Left lung (tissue), 14 donors: ENCODE measurements at regions of chr9 and their contacts with region 1.

Region 1: GRCh38 chr9:129783516-129784361 is 19.2 kb upstream of the TOR1B start:
- DNase-seq: peak; percentile 56 to 79 (median 74)
- ATAC-seq: peak; percentile 100
- H3K4me3 ChIP-seq: no peak overlapping the region
- H3K27ac ChIP-seq: no peak overlapping the region
- H3K4me1 ChIP-seq: peaks cover 0 to 17% of the 10 kb centered on the region in 2 donors
- H3K27me3 ChIP-seq: peaks cover 0 to 22% of the 10 kb centered on the region in 2 donors
- CTCF ChIP-seq: peak; percentile 86 to 95

Region 2: DNA sequence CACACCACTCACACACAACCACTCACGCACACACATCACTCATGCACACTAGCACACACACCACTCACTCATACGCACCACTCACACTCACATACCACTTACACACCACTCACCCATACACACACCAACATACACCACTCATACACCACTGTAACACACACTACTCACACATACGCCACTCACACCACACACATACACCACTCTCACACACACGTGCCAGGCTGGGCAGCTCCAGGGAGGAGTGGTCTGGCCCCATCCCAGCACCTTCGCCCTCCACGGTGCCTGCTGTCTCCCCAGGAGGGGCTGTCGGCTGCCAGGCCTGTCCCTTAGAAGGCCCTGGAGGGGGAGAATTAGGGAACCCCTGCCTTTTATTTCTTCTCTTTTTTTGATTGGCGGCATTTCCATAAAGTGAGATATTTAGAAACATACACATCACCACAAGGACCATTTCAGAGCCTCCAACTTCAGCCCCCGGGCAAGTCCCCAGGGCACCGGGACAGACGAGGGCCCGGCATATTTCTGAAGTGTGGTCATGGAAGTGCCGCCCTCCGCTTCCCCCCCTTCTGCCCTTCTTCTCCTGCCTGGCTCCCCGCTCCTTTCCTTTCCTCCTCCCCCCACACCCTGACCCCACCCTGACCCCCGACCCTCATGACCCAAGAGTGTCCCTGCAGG is 135.5 kb before region 1 on chr9:
- intact Hi-C with region 1: loop called in 1 of 2 experiments (anchors 5 kb)
- DNase-seq: no peak
- ATAC-seq: no peak
- H3K4me3 ChIP-seq: no peak overlapping the region
- H3K27ac ChIP-seq: no peak overlapping the region
- H3K4me1 ChIP-seq: no peaks in the 10 kb centered on the region
- H3K27me3 ChIP-seq: no peaks in the 10 kb centered on the region
- CTCF ChIP-seq: no peak

Region 3: DNA sequence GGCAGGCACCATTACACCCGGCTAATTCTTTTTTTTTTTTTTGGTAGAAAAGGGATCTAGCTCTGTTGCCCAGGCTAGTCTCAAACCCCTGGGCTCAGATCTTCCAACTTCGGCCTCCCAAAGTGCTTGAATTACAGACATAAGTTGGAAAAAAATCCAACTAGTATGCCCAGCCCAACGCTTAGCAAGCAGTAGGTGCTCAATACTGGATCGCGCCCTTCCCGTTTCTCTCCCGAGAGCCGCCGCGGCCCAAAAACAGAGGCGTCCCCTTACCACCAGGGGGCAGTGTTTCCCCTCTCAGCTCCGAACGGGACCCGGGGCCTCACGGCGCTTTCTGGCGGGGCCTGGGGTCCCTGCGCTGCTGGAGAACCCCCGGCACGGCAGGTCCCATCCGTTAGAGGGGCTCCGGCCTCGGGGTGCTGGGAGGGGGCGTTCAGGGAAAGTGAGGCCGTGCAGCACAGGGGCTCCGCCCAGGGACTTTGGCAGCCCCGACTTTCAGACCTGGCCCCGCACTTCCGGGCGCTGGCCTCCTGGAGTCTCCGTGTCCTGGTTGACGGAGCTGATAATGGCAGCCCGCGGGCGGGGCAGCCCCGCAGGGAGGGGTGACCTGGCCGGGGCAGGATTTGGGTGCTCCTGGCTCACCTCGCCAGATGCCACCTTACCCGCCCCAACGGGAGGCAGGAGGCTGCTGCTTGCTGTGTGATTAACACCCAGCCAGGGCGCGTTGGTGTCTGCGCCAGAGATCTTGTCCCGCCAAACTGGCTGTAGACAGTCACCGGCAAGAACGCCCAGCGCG is 46.1 kb before region 1 on chr9:
- intact Hi-C with region 1: loop called in 1 of 2 experiments (anchors 2 kb)
- DNase-seq: peak; percentile 83 to 95 (median 86)
- ATAC-seq: peak; percentile 99
- H3K4me3 ChIP-seq: peak overlapping the region; percentile 47 to 58
- H3K27ac ChIP-seq: peak overlapping the region in 1 of 2 donors; percentile 38
- H3K4me1 ChIP-seq: peaks cover 5 to 11% of the 10 kb centered on the region in 2 donors
- H3K27me3 ChIP-seq: peaks cover 0 to 42% of the 10 kb centered on the region in 2 donors
- CTCF ChIP-seq: peak; percentile 97 to 98